ENCODE measurements at regions of chr17 and their contacts with region 1.

Region 1: DNA sequence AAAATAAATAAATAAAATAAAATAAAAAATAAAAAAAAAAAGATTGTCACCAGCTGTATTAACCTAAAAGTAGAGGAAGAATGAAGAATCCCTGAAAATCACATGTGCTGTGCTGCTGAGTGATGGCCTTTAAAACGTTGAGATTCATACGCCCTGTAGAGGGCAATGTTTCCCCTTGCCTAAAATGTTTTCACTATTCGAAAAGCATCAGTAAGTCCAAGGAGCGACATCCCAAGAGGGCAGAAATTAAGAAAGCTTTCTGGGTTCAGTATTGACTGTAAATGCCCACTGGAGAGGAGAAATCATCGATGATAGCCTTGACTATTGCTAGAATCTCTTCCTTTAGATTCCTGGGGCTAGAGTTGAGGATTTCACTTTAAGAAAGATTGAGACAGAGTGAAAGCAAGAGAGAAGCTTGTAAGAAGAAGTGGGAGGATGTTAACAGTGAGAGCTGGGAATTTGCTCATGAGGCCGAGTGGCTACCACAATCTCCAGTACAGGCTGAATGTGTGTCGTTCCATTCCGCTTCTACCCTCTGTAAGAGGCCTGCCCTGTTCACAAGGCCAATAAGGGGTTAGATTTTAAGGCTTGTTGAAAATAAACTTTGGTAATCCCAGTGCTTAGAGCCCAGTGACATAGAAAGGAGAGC is 170.8 kb upstream of the FAM20A start:
- DNase-seq: peak in 1 of 2 donors; percentile 83
- H3K4me3 ChIP-seq: peak overlapping the region in 1 of 4 donors; percentile 24
- H3K27ac ChIP-seq: peak overlapping the region in 4 of 5 donors; percentile 3 to 69 (median 58)
- H3K4me1 ChIP-seq: peaks cover 0 to 15% (median 3%) of the 10 kb centered on the region in 4 donors
- H3K27me3 ChIP-seq: no peaks in the 10 kb centered on the region
- CTCF ChIP-seq: peak in 4 of 7 experiments; percentile 33 to 57 (median 36)
- EP300 ChIP-seq: no peak
- POLR2A ChIP-seq: no peak

Region 2: GRCh38 chr17:68812876-68813584 is 41.0 kb after region 1 on chr17:
- intact Hi-C with region 1: no loop called
- DNase-seq: no peak
- H3K4me3 ChIP-seq: no peak overlapping the region
- H3K27ac ChIP-seq: no peak overlapping the region
- H3K4me1 ChIP-seq: no peaks in the 10 kb centered on the region
- H3K27me3 ChIP-seq: no peaks in the 10 kb centered on the region
- CTCF ChIP-seq: no peak
- EP300 ChIP-seq: no peak
- POLR2A ChIP-seq: no peak

Region 3: GRCh38 chr17:68941761-68942160 is 169.8 kb after region 1 on chr17:
- intact Hi-C with region 1: no loop called
- DNase-seq: no peak
- H3K4me3 ChIP-seq: no peak overlapping the region
- H3K27ac ChIP-seq: no peak overlapping the region
- H3K4me1 ChIP-seq: no peaks in the 10 kb centered on the region
- H3K27me3 ChIP-seq: no peaks in the 10 kb centered on the region
- CTCF ChIP-seq: no peak
- EP300 ChIP-seq: no peak
- POLR2A ChIP-seq: no peak

Region 4: DNA sequence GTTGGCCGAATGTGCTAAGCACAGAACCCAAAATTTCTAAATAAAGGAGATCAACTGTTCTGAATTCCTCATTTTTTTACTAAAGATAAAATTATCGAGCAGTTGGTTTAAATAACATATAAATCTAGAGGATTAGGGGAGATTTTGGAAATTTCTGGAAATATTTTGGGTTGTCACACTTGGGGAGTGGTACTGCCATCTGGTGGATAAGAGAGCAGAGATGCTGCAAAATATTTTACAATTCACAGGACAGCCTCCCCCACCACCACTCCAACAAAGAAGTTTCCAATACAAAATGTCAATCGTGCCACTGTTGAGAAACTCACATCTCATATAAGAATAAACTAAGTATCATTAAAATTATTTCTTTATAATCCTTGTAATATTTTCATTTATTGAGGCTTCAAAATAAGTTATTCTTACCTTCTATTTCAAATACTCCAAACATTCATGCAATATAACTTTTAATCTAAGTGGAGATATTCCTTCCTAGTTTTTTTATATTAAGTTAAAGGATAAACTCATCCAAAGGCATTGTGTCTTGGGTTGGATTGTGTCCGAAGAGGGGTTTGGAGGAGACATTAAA is 200.2 kb after region 1 on chr17:
- intact Hi-C with region 1: loop called (anchors 10 kb)
- DNase-seq: peak in 1 of 2 donors; percentile 53
- H3K4me3 ChIP-seq: no peak overlapping the region
- H3K27ac ChIP-seq: no peak overlapping the region
- H3K4me1 ChIP-seq: no peaks in the 10 kb centered on the region
- H3K27me3 ChIP-seq: no peaks in the 10 kb centered on the region
- CTCF ChIP-seq: peak in 2 of 7 experiments; percentile 43 to 47
- EP300 ChIP-seq: no peak
- POLR2A ChIP-seq: no peak